Activated CD4-positive, alpha-beta T cell treated with anti-CD3 and anti-CD28 coated beads for 36 hours (primary cell): ENCODE measurements at regions of chr2 and their contacts with region 1.

Region 1: GRCh38 chr2:210171309-210172203 is at the start of gene KANSL1L:
- DNase-seq: peak; percentile 97
- ATAC-seq: peak; percentile 75
- H3K4me3 Mint-ChIP-seq: peak within 1 kb of the TSS; percentile 98
- H3K27ac Mint-ChIP-seq: peak within 1 kb of the TSS; percentile 97
- H3K4me1 Mint-ChIP-seq: peaks cover 33% of the 10 kb centered on the region
- H3K27me3 Mint-ChIP-seq: peaks cover 4% of the 10 kb centered on the region
- total RNA-seq, gene KANSL1L: 4.5 to 6.0 TPM

Region 2: GRCh38 chr2:208315081-208315788 is 1856.3 kb before region 1 on chr2:
- CTCF ChIA-PET with region 1: no interaction called
- POLR2A ChIA-PET with region 1: no interaction called
- intact Hi-C with region 1: loop called in 1 of 2 experiments (anchors 5 kb)
- DNase-seq: no peak
- ATAC-seq: peak; percentile 64
- H3K4me3 Mint-ChIP-seq: no peak overlapping the region
- H3K27ac Mint-ChIP-seq: peak overlapping the region; percentile 44
- H3K4me1 Mint-ChIP-seq: peaks cover 29% of the 10 kb centered on the region
- H3K27me3 Mint-ChIP-seq: no peaks in the 10 kb centered on the region

Region 3: GRCh38 chr2:209423562-209424198 is 747.9 kb before region 1 on chr2 and contains the start of gene MAP2:
- CTCF ChIA-PET with region 1: no interaction called
- POLR2A ChIA-PET with region 1: no interaction called
- intact Hi-C with region 1: loop called in 1 of 2 experiments (anchors 1 kb)
- DNase-seq: peak; percentile 87
- ATAC-seq: peak; percentile 98
- H3K4me3 Mint-ChIP-seq: peak within 1 kb of the TSS; percentile 67
- H3K27ac Mint-ChIP-seq: no peak within 1 kb of the TSS
- H3K4me1 Mint-ChIP-seq: peaks cover 10% of the 10 kb centered on the region
- H3K27me3 Mint-ChIP-seq: peaks cover 32% of the 10 kb centered on the region
- total RNA-seq, gene MAP2: 0.34 to 0.39 TPM

Region 4: GRCh38 chr2:209663150-209663549 is 508.4 kb before region 1 on chr2:
- CTCF ChIA-PET with region 1: no interaction called
- POLR2A ChIA-PET with region 1: no interaction called
- intact Hi-C with region 1: no loop called
- DNase-seq: no peak
- ATAC-seq: no peak
- H3K4me3 Mint-ChIP-seq: no peak overlapping the region
- H3K27ac Mint-ChIP-seq: no peak overlapping the region
- H3K4me1 Mint-ChIP-seq: no peaks in the 10 kb centered on the region
- H3K27me3 Mint-ChIP-seq: peaks cover 1% of the 10 kb centered on the region

Region 5: DNA sequence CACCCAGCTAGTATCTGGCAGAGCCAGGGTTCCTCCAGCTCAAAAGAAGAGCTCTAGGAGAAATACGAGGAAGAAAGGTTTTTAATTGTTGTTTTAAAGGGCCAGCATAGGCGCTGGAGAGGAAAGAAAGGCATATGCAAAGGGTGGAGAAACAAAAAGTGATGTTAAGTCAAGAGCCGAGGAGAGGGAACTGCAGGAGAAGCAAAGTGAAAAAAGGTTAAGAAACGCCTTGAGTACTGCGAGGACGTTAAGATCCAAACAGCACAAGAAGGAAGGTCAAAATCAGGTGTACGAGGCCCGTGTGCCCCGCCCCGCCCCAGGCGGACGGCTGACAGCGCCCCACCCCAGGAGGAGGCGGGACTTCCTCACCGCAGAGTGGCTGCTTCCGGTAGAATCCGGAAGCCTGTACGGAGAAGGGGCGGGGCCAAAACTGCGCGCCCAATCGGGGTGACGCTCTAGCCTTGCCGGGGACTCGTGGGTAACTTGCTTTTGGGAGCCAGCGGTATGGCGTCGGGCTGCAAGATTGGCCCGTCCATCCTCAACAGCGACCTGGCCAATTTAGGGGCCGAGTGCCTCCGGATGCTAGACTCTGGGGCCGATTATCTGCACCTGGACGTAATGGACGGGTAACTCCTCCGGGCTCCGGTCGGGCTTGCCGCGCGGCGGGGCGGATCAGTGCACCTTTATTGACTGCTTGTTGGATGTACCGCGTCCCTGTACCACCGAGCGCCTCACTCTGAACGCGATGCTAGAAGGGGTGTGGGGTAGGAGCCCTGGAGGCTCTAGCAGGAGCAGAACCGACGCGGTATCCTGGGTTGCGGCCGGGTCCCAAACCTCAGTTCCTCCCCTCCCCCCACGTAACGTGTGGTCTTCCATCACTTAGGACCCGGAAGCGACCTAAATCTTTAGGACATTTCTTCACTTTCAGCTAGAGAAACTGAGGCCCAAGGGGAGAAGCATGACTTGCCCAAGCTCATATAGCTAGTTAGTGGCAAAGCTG is 169.1 kb before region 1 on chr2 and contains the start of gene RPE:
- CTCF ChIA-PET with region 1: no interaction called
- POLR2A ChIA-PET with region 1: no interaction called
- intact Hi-C with region 1: loop called (anchors 1 kb)
- DNase-seq: peak; percentile 99
- ATAC-seq: peak; percentile 99
- H3K4me3 Mint-ChIP-seq: peak within 1 kb of the TSS; percentile 92
- H3K27ac Mint-ChIP-seq: peak within 1 kb of the TSS; percentile 98
- H3K4me1 Mint-ChIP-seq: peaks cover 53% of the 10 kb centered on the region
- H3K27me3 Mint-ChIP-seq: no peaks in the 10 kb centered on the region
- total RNA-seq, gene RPE: 33.2 to 53.8 TPM

Region 6: GRCh38 chr2:210099940-210100339 is 71.6 kb before region 1 on chr2:
- CTCF ChIA-PET with region 1: no interaction called
- POLR2A ChIA-PET with region 1: no interaction called
- intact Hi-C with region 1: loop called in 1 of 2 experiments (anchors 5 kb)
- DNase-seq: no peak
- ATAC-seq: no peak
- H3K4me3 Mint-ChIP-seq: no peak overlapping the region
- H3K27ac Mint-ChIP-seq: no peak overlapping the region
- H3K4me1 Mint-ChIP-seq: no peaks in the 10 kb centered on the region
- H3K27me3 Mint-ChIP-seq: no peaks in the 10 kb centered on the region

Region 7: DNA sequence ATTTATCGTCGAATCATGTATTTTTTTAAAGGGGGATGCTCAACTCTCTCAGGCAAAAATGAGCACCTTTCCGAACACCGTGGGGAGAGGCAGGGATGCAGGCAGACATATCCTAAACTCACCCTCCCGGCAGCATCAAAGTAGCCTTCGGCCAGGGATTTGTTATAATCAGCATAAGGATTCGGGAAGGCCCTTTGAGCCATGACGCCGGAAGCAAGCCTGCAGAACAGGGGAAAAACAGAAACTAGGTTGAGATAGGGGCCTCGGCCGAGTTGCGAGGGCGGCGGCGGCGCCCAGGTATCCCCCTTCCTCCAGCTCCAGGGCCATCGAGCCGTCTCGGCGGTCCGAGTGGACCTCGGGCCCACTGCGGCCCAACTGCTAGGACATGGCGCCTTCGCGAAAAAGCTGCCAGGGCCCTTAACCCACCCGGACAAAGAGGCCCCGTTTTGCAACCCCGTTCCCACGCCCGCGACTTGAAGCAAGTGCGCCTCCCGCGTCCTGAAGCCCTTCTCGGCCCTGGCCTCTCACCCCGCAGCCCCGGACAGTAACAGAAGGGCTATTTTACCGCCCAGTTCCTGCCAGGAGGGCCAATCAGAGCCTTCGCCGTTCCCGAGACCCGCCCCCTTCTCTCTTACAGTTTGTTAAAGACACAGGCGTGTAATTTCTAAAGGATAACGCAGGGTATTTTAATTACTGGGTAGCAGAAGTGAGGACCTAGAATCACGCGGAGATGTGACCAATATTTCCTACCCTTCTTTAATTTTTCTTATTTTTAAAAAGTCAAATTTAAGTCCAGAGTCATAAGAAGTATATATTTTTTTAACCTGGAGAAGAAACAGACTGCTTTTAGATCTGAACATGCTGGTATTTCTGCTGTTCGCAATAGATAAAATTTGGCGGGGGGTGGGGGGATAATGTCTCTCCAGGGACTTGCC is 304.9 kb after region 1 on chr2 and contains the start of gene LANCL1:
- CTCF ChIA-PET with region 1: no interaction called
- POLR2A ChIA-PET with region 1: no interaction called
- intact Hi-C with region 1: loop called (anchors 1 to 5 kb)
- DNase-seq: peak; percentile 89
- ATAC-seq: peak; percentile 99
- H3K4me3 Mint-ChIP-seq: peak within 1 kb of the TSS; percentile 97
- H3K27ac Mint-ChIP-seq: peak within 1 kb of the TSS; percentile 97
- H3K4me1 Mint-ChIP-seq: peaks cover 45% of the 10 kb centered on the region
- H3K27me3 Mint-ChIP-seq: no peaks in the 10 kb centered on the region
- total RNA-seq, gene LANCL1: 43.3 to 45.4 TPM